ENCODE measurements at regions of chr15 and their contacts with region 1.

Region 1: GRCh38 chr15:73200339-73200738 is 148.1 kb downstream of the NEO1 start:
- DNase-seq: no peak
- H3K4me3 ChIP-seq: no peak overlapping the region
- H3K27ac ChIP-seq: no peak overlapping the region
- H3K4me1 ChIP-seq: peaks cover 12% of the 10 kb centered on the region
- H3K27me3 ChIP-seq: no peaks in the 10 kb centered on the region
- CTCF ChIP-seq: no peak

Region 2: DNA sequence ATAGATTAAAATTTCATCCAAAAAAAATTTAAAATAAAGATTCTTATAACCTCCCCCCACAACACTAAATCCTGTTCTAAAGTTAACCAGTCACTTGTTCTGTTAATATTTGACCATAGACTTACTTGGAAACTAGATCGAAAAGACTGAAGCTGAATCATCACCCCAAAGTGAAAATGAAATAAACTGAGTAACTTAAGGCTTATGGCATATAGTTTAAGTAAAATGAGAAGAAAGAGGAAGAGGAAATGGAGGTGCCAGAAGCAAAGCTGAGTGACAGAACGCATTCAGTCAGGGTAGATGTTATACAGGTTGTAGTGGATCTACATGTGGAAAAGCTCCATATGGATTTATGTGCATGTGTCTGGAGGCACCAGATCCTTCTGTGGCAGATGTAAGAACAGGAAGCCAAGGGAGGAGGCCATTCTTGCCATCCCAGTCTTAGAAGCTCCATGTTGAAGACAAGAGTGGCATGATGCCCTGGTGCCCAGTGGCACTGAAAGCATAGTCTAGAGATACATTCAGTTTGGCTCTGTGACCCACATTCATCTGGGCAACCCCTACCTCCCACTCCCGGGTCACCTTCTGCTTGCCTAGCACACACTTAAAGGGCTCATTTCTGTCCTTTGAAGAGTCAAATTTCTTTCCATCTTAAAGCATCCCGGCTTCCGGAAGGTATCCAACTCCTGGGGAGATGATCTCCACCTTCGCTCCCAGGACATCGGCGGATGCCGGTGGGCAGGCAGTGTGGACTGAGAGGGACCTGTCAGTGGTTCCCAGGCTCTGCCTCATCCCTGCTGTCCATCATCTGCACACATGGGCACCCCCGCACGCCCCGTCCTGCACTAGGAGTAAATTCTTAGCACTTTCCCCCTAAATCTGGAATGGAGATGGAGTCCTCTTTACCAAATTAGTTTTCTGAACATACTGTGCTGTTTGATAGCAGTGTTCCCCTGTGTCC is 57.3 kb before region 1 on chr15:
- CTCF ChIA-PET with region 1: no interaction called
- POLR2A ChIA-PET with region 1: no interaction called
- intact Hi-C with region 1: loop called (anchors 10 kb)
- DNase-seq: no peak
- H3K4me3 ChIP-seq: no peak overlapping the region
- H3K27ac ChIP-seq: no peak overlapping the region
- H3K4me1 ChIP-seq: peaks cover 34% of the 10 kb centered on the region
- H3K27me3 ChIP-seq: no peaks in the 10 kb centered on the region
- CTCF ChIP-seq: no peak

Region 3: DNA sequence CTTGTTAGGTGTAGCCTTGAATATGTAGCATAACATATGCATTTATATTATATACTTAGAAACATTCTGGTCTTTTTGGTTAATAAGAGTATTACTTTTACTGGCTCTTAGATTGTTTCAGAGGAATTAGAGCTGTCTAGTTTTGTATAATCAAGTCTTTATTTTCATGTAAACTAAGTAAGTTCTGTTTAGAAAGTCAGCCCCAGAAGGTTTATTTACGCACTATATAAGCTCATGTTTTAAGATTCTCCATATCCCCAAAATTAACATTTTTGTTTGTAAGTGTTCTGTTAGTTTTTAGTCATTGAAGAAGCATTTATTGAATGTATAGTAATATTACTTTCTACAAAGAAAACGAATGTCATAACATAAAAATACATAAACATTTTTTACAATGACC is 10.3 kb after region 1 on chr15:
- CTCF ChIA-PET with region 1: no interaction called
- POLR2A ChIA-PET with region 1: interaction called, 11 read pairs
- intact Hi-C with region 1: no loop called
- DNase-seq: no peak
- H3K4me3 ChIP-seq: no peak overlapping the region
- H3K27ac ChIP-seq: no peak overlapping the region
- H3K4me1 ChIP-seq: no peaks in the 10 kb centered on the region
- H3K27me3 ChIP-seq: no peaks in the 10 kb centered on the region
- CTCF ChIP-seq: no peak

Measured in A673 (cell line).